Cardiac septum (tissue), 1 donor: ENCODE measurements at regions of chr6 and their contacts with region 1.

Region 1: DNA sequence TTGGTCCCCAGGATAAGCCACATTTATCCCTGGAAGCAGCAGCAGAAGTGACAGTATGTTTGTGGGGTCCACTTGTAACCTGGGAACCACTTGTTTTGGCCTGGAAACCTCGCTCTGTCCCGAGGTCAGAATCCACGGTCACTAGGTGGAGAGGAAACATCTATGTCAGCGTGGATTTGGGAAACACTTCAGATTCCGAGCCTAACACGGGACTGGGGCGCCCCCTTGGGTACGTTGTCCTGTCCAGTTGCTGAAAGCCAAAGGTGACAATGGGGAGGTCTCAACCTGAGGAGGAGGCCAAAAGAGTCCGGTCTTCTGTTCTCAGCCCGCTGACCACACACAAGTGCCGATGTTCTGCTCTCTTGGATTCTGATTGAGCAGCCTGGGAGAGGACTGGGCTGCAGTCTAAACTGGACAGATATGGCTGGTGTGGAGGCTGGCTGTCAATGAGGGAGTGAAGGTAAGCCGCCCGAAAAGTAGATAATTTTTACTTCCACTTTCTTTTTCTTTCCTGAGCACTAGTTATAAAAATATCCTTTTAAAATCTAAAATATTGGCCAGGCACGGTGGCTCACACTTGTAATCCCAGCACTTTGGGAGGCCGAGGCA is 4.9 kb upstream of the ZFP57 start:
- DNase-seq: no peak

Region 2: DNA sequence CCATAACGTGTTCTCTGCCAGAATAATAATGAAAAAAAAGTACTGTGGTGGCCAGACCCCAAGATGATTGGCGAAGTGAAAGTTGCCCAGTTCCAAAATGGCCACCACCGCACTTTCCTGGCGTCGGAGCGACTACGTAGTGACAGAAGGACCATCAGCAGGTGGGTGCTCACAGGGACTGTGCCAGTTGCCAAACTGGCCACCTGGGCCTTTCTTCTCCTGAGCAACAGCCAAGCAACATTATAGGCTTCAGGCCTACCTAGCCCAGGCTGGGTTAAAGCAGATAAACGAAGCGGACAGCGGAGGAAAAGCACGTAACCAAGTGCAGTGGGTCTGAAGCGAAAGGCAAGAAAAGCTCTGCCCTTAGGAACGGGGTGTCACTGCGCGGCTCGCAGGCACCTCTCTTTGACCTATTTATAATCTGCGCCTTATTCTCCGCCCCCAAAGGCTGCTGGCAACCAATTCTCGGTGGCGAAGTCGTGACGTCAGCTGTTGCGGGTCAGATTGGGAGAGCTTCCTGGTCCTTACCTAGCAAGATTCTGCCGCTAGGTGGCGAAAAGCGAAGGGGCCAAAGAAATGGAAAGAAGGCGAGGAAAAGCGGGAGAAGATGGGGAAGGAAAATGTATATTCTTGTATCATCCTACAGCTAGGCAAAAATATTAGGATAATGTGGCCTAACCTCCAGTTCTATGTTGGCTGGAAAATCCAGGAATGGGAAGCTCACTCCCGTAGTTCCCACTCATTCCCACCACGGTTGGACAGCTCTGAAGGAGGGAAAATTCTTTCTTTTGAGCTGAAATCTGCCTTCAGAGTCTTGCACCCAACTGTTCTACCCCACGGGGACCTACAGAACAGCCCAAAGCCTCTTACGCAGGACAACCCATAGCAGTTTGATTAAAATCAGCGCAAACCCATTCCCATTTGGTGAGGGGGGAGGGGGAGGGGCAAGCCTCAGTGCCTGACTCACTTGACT is 35.8 kb before region 1 on chr6:
- intact Hi-C with region 1: loop called (anchors 2 kb)
- DNase-seq: peak; percentile 100

Region 3: GRCh38 chr6:29953001-29953441 is 267.2 kb after region 1 on chr6:
- intact Hi-C with region 1: no loop called
- DNase-seq: no peak